K562 (cell line): ENCODE measurements at regions of chr19 and their contacts with region 1.

Region 1: DNA sequence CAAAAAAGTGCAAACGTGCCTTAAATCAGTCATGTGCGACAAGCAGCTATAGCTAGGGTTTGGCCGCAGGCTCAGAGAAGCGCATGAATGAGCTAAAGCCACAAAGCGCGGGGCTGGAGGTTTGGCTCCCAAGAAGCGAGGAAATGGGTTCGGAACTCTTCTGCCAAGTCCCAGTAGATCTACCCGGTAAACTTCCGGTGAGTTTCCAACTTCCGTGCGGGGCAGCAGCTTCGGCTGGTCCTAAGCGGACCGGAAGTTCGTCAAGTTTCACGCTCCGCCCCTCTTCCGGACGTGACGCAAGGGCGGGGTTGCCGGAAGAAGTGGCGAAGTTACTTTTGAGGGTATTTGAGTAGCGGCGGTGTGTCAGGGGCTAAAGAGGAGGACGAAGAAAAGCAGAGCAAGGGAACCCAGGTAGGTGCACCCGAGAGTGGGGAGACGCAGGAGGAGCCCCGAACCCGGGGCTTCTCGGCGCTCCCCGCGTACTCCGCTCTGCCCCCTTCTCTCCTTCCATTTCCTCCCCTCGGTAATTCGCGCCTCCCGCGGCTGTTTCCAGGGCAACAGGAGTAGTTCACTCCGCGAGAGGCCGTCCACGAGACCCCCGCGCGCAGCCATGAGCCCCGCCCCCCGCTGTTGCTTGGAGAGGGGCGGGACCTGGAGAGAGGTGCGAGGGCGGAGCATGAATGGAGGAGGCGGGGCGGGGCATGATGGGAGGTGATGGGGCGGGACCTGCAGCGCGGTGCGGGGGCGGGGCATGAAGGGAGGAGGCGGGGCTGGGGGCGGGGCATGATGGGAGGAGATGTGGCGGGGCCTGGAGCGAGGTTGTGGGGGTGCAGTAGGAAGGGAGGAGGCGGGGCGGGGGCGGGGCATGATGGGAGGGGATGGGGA is at the start of gene NR1H2:
- DNase-seq: peak; percentile 83 to 99 (median 90)
- ATAC-seq: peak; percentile 77
- H3K4me3 ChIP-seq: peak within 1 kb of the TSS; percentile 85
- H3K27ac ChIP-seq: peak within 1 kb of the TSS; percentile 100
- H3K4me1 ChIP-seq: peaks cover 34 to 55% of the 10 kb centered on the region in 2 experiments
- H3K27me3 ChIP-seq: no peaks in the 10 kb centered on the region
- CTCF ChIP-seq: no peak
- EP300 ChIP-seq: peak; percentile 64
- POLR2A ChIP-seq: peak; percentile 97
- RAD21 ChIP-seq: no peak
- polyA plus RNA-seq, gene NR1H2: 0.11 to 1.5 TPM

Region 2: DNA sequence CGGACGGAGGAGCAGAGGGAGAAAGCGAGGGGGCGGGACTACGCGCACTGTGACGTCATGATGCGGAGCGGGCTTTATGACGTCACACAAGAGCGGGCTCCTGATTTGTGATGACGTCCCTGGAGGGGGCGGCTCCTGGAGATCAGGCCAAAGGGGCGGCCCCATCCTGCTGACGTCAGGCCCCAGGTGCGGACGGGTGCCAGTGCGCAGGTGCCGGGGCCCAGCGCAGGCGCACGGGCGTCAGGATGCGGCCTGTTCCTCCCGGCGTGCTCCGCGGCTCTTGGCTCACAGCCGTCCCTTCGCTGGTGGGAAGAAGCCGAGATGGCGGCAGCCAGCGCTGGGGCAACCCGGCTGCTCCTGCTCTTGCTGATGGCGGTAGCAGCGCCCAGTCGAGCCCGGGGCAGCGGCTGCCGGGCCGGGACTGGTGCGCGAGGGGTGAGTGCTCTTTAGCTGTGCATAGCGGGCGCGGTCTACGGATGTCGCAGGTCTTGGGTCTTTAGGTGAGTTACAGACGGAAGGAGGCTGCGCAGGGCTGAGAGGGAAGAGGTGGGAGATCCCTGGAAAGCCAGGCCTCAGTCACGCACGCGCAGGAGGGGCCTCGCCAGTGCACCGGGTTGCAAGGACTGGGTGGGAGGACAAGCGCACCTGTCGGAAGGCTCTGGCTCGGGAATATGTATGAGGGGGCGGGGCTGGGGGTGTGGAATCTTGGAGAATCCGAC is 100.0 kb after region 1 on chr19 and contains the starts of genes EMC10 and GARIN5A:
- CTCF ChIA-PET with region 1: no interaction called
- POLR2A ChIA-PET with region 1: interaction called, 4 read pairs
- in situ Hi-C with region 1: no loop called
- intact Hi-C with region 1: loop called (anchors 1 kb)
- DNase-seq: peak; percentile 94 to 99 (median 98)
- ATAC-seq: peak; percentile 96
- H3K4me3 ChIP-seq: peak within 1 kb of the TSS; percentile 72
- H3K27ac ChIP-seq: peak within 1 kb of the TSS; percentile 82
- H3K4me1 ChIP-seq: peaks cover 5 to 53% of the 10 kb centered on the region in 2 experiments; a peak in 4 of 5 replicates
- H3K27me3 ChIP-seq: no peaks in the 10 kb centered on the region; a peak in 2 of 5 replicates
- CTCF ChIP-seq: no peak
- EP300 ChIP-seq: no peak
- POLR2A ChIP-seq: peak; percentile 94
- RAD21 ChIP-seq: no peak
- polyA plus RNA-seq, gene EMC10: 1.4 to 2.9 TPM
- polyA plus RNA-seq, gene GARIN5A: 0.13 TPM in 1 of 2 experiments, not detected in the other

Region 3: DNA sequence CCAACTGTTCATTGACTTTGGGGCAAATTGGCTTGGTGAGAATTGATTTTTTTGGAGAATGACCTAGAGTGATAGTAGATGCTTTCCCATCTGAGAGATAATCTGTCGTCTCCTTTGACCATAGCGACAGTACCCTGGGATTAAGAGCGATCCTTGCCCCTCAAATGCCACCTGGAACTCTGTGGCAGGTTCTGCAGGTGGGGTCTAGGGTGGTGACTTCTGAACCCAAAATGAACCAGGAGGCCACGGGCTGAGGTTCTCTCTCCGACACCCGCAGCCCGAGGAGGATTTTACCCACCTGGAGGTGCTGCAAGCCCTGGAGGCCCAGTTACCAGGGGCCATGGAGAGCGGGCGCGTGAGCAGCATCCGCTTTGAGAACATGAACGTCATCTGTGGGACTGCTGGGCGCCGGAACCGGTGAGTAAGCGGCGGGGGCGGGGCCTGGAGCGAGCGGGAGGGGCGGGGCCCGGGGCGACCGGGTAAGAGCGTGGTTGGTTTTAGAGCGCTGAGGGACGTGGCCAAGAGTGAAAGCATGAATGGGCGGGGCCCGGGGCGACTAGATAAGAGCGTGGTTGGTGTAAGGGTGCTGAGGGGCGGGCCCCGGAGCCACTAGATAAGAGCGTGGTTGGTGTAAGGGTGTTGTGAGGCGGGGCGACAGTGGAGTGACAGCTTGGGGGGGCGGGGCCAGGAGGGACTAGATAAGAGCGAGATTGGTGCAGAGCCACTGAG is 281.5 kb after region 1 on chr19:
- CTCF ChIA-PET with region 1: no interaction called
- POLR2A ChIA-PET with region 1: no interaction called
- in situ Hi-C with region 1: no loop called
- intact Hi-C with region 1: loop called (anchors 5 kb)
- DNase-seq: peak; percentile 96 to 100 (median 98)
- ATAC-seq: peak; percentile 88
- H3K4me3 ChIP-seq: peak overlapping the region; percentile 66
- H3K27ac ChIP-seq: peak overlapping the region; percentile 98
- H3K4me1 ChIP-seq: peaks cover 20 to 51% of the 10 kb centered on the region in 2 experiments
- H3K27me3 ChIP-seq: no peaks in the 10 kb centered on the region; a peak in 1 of 5 replicates
- CTCF ChIP-seq: no peak; a peak in 1 of 6 replicates
- EP300 ChIP-seq: no peak; the same call in 1 of the 2 replicates
- POLR2A ChIP-seq: peak; percentile 82; the same call in 1 of the 2 replicates
- RAD21 ChIP-seq: no peak